ENCODE measurements at regions of chrX and their contacts with region 1.

Region 1: GRCh38 chrX:94676285-94676684 is 1002.3 kb downstream of the FAM133A start:
- DNase-seq: no peak
- ATAC-seq: no peak
- H3K4me3 ChIP-seq: no peak overlapping the region
- H3K4me3 Mint-ChIP-seq: no peak overlapping the region
- H3K27ac ChIP-seq: no peak overlapping the region
- H3K27ac Mint-ChIP-seq: no peak overlapping the region
- H3K4me1 ChIP-seq: no peaks in the 10 kb centered on the region
- H3K4me1 Mint-ChIP-seq: no peaks in the 10 kb centered on the region
- H3K27me3 ChIP-seq: no peaks in the 10 kb centered on the region
- H3K27me3 Mint-ChIP-seq: no peaks in the 10 kb centered on the region
- CTCF ChIP-seq: no peak

Region 2: DNA sequence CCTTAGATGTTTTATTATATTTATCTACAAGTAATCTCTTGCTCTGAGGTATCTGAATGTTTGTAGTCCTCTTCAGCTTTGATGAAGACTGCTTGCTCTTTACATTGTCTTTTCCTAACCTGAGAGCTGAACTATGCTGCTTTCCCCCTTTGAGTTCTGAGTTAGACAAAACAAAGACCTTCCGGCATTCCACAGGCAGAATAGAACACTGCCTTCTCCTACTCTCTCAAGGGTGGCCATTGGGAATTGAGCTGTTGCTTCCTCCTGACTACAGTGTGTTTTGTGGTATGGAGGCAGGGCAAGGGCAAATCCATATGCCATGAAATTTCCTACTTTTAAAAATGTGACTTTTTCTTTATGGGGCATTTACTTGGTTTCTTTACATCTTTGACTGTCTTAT is 161.3 kb before region 1 on chrX:
- CTCF ChIA-PET with region 1: no interaction called
- POLR2A ChIA-PET with region 1: no interaction called
- intact Hi-C with region 1: no loop called
- DNase-seq: no peak
- ATAC-seq: no peak
- H3K4me3 ChIP-seq: no peak overlapping the region
- H3K4me3 Mint-ChIP-seq: no peak overlapping the region
- H3K27ac ChIP-seq: no peak overlapping the region
- H3K27ac Mint-ChIP-seq: no peak overlapping the region
- H3K4me1 ChIP-seq: no peaks in the 10 kb centered on the region
- H3K4me1 Mint-ChIP-seq: no peaks in the 10 kb centered on the region
- H3K27me3 ChIP-seq: no peaks in the 10 kb centered on the region
- H3K27me3 Mint-ChIP-seq: no peaks in the 10 kb centered on the region
- CTCF ChIP-seq: no peak

Region 3: DNA sequence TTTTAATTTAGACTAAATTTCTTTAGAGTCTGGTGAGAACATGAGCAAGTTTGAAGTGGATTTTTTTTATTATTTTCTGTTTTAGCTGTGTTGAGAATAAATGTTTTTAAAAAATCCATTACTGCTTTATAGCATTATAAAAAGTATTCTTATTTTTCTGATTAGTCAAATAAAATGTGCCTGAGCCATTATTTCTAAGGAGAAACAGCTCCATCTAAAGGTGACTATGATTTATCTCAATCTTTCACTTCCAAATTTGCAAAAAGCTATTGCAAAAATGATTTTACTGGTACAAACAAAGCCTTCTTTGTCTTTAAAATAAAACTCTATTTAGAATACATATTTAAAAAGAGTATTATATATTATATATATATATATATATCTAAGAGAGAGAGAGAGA is 43.0 kb before region 1 on chrX:
- CTCF ChIA-PET with region 1: no interaction called
- POLR2A ChIA-PET with region 1: no interaction called
- intact Hi-C with region 1: loop called in 1 of 2 experiments (anchors 5 kb)
- DNase-seq: no peak
- ATAC-seq: no peak
- H3K4me3 ChIP-seq: no peak overlapping the region
- H3K4me3 Mint-ChIP-seq: no peak overlapping the region
- H3K27ac ChIP-seq: no peak overlapping the region
- H3K27ac Mint-ChIP-seq: no peak overlapping the region
- H3K4me1 ChIP-seq: no peaks in the 10 kb centered on the region
- H3K4me1 Mint-ChIP-seq: no peaks in the 10 kb centered on the region
- H3K27me3 ChIP-seq: no peaks in the 10 kb centered on the region
- H3K27me3 Mint-ChIP-seq: no peaks in the 10 kb centered on the region
- CTCF ChIP-seq: no peak

Measured in CD4-positive, alpha-beta T cell (primary cell).